ENCODE measurements at regions of chr9 and their contacts with region 1.

Region 1: DNA sequence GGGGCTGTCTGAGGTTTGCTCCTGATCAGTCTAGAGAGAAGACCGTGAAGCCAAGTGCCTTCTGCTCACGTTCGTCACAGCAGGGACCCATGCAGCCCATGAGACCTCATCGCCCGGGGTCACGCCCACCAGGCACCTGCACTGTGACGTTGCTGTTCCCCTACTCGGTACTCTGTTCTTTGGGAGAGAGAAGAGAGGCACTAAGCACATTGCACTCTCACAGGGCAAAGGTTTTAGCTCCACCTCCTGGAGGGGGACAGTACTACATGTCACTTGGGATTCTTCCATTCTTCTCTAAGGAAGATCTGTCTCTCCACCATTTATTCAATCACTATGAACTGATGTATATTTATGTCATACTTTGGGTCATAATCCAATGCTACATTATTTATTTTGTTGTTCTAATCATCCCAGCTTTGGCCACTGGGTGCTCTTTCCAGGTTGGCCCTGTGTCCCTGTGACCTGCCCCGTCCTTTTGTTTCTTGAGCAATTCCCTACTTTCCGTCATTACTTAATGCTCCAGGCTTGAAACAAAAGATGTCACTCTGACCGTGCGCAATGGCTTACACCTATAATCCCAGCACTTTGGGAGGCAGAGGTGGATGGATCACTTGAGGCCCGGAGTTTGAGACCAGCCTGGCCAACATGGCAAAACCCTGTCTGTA is 31.4 kb upstream of the BRD3 start:
- DNase-seq: peak; percentile 24 to 73 (median 62)
- ATAC-seq: peak; percentile 99
- H3K4me3 ChIP-seq: no peak overlapping the region
- H3K4me3 Mint-ChIP-seq: no peak overlapping the region
- H3K27ac ChIP-seq: no peak overlapping the region
- H3K27ac Mint-ChIP-seq: no peak overlapping the region
- H3K4me1 ChIP-seq: no peaks in the 10 kb centered on the region
- H3K4me1 Mint-ChIP-seq: no peaks in the 10 kb centered on the region
- H3K27me3 ChIP-seq: peaks cover 0 to 8% of the 10 kb centered on the region in 2 experiments
- H3K27me3 Mint-ChIP-seq: peaks cover 15% of the 10 kb centered on the region
- CTCF ChIP-seq: peak; percentile 90

Region 2: GRCh38 chr9:134024828-134025605 is 74.2 kb before region 1 on chr9 and contains the start of gene BRD3OS:
- CTCF ChIA-PET with region 1: no interaction called
- POLR2A ChIA-PET with region 1: no interaction called
- intact Hi-C with region 1: loop called in 1 of 2 experiments (anchors 1 kb)
- DNase-seq: peak; percentile 81 to 98 (median 90)
- ATAC-seq: peak; percentile 96
- H3K4me3 ChIP-seq: peak within 1 kb of the TSS; percentile 71 to 92
- H3K4me3 Mint-ChIP-seq: peak within 1 kb of the TSS; percentile 80
- H3K27ac ChIP-seq: peak within 1 kb of the TSS; percentile 56 to 65
- H3K27ac Mint-ChIP-seq: peak within 1 kb of the TSS; percentile 45
- H3K4me1 ChIP-seq: peaks cover 11% of the 10 kb centered on the region
- H3K4me1 Mint-ChIP-seq: peaks cover 11% of the 10 kb centered on the region
- H3K27me3 ChIP-seq: no peaks in the 10 kb centered on the region
- H3K27me3 Mint-ChIP-seq: no peaks in the 10 kb centered on the region
- CTCF ChIP-seq: no peak
- total RNA-seq, gene BRD3OS: 3.3 to 4.2 TPM

Region 3: DNA sequence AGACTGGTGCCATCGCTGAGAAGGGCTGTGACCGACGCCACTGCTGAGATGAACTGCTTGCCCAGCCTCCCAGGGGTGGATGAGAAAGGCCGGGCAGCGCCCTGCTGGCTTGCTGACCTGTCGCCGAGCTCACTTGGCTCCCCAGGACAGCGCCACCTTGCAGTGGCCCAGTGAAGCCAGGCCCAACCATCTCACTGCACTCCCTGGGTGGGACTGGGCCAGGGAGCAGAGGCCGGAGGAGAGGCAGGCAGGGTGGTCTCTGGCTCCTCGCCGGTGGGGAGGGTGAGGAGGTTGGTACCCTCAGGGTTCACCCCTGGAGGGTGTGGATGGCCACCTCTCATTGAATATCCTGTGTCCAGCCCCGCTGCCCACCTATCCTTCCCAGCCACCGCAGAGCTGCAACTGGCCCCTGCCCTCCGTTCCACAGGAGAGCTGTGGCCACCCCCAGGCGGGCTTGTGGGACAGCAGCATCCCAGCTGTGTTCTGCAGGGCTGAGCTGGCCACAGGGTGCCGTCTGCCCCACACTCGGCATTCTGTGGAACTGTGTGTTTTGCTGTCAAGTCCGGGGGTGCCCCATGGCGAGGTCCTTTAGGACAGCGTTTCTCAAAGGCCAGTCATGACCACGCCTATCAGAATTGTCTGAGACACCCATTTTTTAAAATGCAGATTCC is 740.3 kb after region 1 on chr9:
- CTCF ChIA-PET with region 1: no interaction called
- POLR2A ChIA-PET with region 1: no interaction called
- intact Hi-C with region 1: no loop called
- DNase-seq: no peak
- ATAC-seq: no peak
- H3K4me3 ChIP-seq: no peak overlapping the region
- H3K4me3 Mint-ChIP-seq: no peak overlapping the region
- H3K27ac ChIP-seq: no peak overlapping the region
- H3K27ac Mint-ChIP-seq: no peak overlapping the region
- H3K4me1 ChIP-seq: no peaks in the 10 kb centered on the region
- H3K4me1 Mint-ChIP-seq: no peaks in the 10 kb centered on the region
- H3K27me3 ChIP-seq: no peaks in the 10 kb centered on the region
- H3K27me3 Mint-ChIP-seq: no peaks in the 10 kb centered on the region
- CTCF ChIP-seq: no peak